ENCODE measurements at regions of chr9 and their contacts with region 1.

Region 1: DNA sequence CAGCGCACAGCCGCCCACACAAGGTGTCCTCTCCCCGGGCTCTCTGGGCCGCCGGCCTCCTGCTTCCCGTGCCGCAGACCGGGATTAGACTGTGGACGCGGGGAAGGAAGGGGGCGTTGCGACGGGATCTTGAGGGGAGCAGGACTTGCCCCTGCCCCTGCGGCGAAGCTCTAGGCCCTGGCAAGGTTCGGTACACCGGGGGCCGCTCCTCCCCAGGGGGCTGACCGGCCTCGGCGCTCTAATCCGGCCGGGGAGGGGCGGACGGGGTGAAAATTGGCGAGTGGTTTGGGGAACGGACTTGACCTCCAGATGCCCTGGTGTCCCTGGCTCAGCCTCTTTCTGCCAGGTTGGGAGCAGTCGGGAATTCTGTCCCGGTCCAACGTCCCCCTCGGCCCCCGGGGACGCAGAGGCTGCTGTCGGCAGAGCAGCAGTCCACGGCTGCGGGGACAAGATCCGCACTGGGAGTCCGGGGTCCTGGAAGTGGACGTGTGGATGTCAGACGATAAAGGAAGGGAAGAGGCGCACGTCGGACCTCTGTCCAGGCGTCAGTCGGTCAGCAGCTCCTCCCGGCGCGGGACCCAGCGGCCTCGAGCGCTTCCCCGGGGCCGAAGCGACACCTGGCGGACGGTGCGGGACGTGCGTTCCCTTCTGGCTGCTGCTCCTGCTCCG is 1.9 kb upstream of the CNTFR start:
- DNase-seq: peak; percentile 86
- H3K4me3 Mint-ChIP-seq: peak overlapping the region; percentile 53
- H3K27ac Mint-ChIP-seq: no peak overlapping the region
- H3K4me1 Mint-ChIP-seq: peaks cover 25% of the 10 kb centered on the region
- H3K27me3 Mint-ChIP-seq: peaks cover 60% of the 10 kb centered on the region

Region 2: DNA sequence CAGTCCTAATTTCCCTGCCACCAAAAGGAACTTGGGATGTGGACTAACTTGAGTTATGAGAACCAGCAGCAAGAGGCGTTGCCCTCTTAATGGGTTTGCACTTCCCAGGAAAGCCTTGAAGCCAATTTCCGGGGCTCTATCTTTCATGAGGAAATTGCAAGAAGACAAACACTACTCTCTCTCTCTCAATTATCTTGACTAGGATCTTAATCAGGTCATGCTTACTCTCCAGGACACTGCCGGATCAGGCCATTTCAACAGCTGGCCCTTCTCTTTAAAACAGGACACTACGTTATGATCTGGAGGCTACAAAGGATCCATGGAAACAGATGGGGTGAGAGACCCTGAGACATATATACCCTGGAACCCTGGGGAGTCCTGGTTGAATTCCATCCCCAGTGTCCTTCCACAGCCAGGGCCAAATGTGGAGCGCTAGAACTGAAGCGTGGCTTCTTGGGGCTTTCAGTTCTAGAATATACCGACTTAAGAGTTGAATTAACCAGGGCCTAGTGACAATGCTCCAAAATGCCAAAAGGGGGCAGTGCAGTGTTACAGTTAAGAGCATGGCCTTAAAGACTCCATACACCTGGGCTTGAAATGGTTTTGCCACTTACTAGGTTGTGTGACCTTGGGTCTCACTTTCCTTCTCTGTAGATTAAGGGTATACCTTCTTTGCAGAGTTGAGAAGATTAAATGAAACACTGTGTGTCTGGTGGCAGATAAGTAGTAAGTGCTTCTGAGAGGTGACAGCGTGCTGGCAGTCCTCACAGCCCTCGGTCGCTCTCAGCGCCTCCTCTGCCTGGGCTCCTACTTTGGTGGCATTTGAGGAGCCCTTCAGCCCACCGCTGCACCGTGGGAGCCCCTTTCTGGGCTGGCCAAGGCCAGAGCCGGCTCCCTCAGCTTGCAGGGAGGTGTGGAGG is 154.1 kb before region 1 on chr9:
- CTCF ChIA-PET with region 1: interaction called, 14 read pairs
- POLR2A ChIA-PET with region 1: no interaction called
- intact Hi-C with region 1: loop called (anchors 5 kb)
- DNase-seq: peak; percentile 70
- H3K4me3 Mint-ChIP-seq: no peak overlapping the region
- H3K27ac Mint-ChIP-seq: no peak overlapping the region
- H3K4me1 Mint-ChIP-seq: peaks cover 8% of the 10 kb centered on the region
- H3K27me3 Mint-ChIP-seq: no peaks in the 10 kb centered on the region

Region 3: GRCh38 chr9:34546834-34547827 is 44.3 kb before region 1 on chr9:
- CTCF ChIA-PET with region 1: interaction called, 30 read pairs
- POLR2A ChIA-PET with region 1: interaction called, 3 read pairs
- intact Hi-C with region 1: loop called (anchors 1 kb)
- DNase-seq: peak; percentile 77
- H3K4me3 Mint-ChIP-seq: no peak overlapping the region
- H3K27ac Mint-ChIP-seq: no peak overlapping the region
- H3K4me1 Mint-ChIP-seq: no peaks in the 10 kb centered on the region
- H3K27me3 Mint-ChIP-seq: peaks cover 9% of the 10 kb centered on the region

Region 4: GRCh38 chr9:34578241-34579103 is 12.9 kb before region 1 on chr9:
- CTCF ChIA-PET with region 1: interaction called, 23 read pairs
- POLR2A ChIA-PET with region 1: no interaction called
- intact Hi-C with region 1: no loop called
- DNase-seq: peak; percentile 30
- H3K4me3 Mint-ChIP-seq: no peak overlapping the region
- H3K27ac Mint-ChIP-seq: no peak overlapping the region
- H3K4me1 Mint-ChIP-seq: peaks cover 13% of the 10 kb centered on the region
- H3K27me3 Mint-ChIP-seq: peaks cover 51% of the 10 kb centered on the region

Region 5: GRCh38 chr9:34620061-34620994 is 28.9 kb after region 1 on chr9 and contains the start of gene DCTN3:
- CTCF ChIA-PET with region 1: interaction called, 10 read pairs
- POLR2A ChIA-PET with region 1: interaction called, 3 read pairs
- intact Hi-C with region 1: no loop called
- DNase-seq: peak; percentile 95
- H3K4me3 Mint-ChIP-seq: peak within 1 kb of the TSS; percentile 93
- H3K27ac Mint-ChIP-seq: peak within 1 kb of the TSS; percentile 52
- H3K4me1 Mint-ChIP-seq: peaks cover 26% of the 10 kb centered on the region
- H3K27me3 Mint-ChIP-seq: peaks cover 25% of the 10 kb centered on the region
- total RNA-seq, gene DCTN3: 85.3 to 87.3 TPM

Region 6: GRCh38 chr9:34675048-34675714 is 83.8 kb after region 1 on chr9:
- CTCF ChIA-PET with region 1: no interaction called
- POLR2A ChIA-PET with region 1: no interaction called
- intact Hi-C with region 1: no loop called
- DNase-seq: peak; percentile 74
- H3K4me3 Mint-ChIP-seq: no peak overlapping the region
- H3K27ac Mint-ChIP-seq: no peak overlapping the region
- H3K4me1 Mint-ChIP-seq: peaks cover 2% of the 10 kb centered on the region
- H3K27me3 Mint-ChIP-seq: no peaks in the 10 kb centered on the region